Naive thymus-derived CD4-positive, alpha-beta T cell (primary cell): ENCODE measurements at regions of chr18 and their contacts with region 1.

Region 1: GRCh38 chr18:54224379-54225014 is at the start of gene MBD2:
- DNase-seq: peak; percentile 87 to 96 (median 90)
- ATAC-seq: peak; percentile 96
- H3K4me3 ChIP-seq: peak within 1 kb of the TSS; percentile 49
- H3K4me3 Mint-ChIP-seq: peak within 1 kb of the TSS; percentile 87 to 96 (median 92)
- H3K27ac ChIP-seq: peak within 1 kb of the TSS; percentile 72
- H3K27ac Mint-ChIP-seq: peak within 1 kb of the TSS; percentile 81 to 98 (median 92)
- H3K4me1 ChIP-seq: peaks cover 10 to 19% of the 10 kb centered on the region in 2 donors
- H3K4me1 Mint-ChIP-seq: peaks cover 14 to 43% (median 41%) of the 10 kb centered on the region in 7 donors
- H3K27me3 ChIP-seq: no peaks in the 10 kb centered on the region
- H3K27me3 Mint-ChIP-seq: no peaks in the 10 kb centered on the region
- total RNA-seq, gene MBD2: 69.7 to 118 (median 76.9) TPM

Region 2: DNA sequence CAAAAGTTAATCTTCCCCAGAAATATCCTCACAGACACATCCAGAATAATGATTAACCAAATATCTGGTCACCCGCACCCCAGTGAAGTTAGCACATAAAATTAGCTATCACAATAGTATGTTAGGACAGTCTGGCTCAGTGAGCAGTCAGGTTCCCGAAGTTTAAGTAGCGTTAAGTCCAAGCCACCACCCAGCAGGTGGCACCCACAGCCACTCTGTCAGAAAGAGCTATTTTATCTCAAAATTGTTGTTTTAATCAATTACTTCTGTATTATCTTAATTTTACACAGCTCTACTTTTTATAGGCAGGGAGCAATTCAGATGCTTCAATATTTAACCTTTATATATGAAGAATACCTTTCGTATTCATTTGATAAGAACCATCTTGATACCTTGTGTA is 537.5 kb before region 1 on chr18:
- CTCF ChIA-PET with region 1: no interaction called
- POLR2A ChIA-PET with region 1: no interaction called
- intact Hi-C with region 1: no loop called
- DNase-seq: no peak
- ATAC-seq: no peak
- H3K4me3 ChIP-seq: no peak overlapping the region
- H3K4me3 Mint-ChIP-seq: no peak overlapping the region
- H3K27ac ChIP-seq: no peak overlapping the region
- H3K27ac Mint-ChIP-seq: no peak overlapping the region
- H3K4me1 ChIP-seq: no peaks in the 10 kb centered on the region
- H3K4me1 Mint-ChIP-seq: no peaks in the 10 kb centered on the region
- H3K27me3 ChIP-seq: no peaks in the 10 kb centered on the region
- H3K27me3 Mint-ChIP-seq: no peaks in the 10 kb centered on the region

Region 3: DNA sequence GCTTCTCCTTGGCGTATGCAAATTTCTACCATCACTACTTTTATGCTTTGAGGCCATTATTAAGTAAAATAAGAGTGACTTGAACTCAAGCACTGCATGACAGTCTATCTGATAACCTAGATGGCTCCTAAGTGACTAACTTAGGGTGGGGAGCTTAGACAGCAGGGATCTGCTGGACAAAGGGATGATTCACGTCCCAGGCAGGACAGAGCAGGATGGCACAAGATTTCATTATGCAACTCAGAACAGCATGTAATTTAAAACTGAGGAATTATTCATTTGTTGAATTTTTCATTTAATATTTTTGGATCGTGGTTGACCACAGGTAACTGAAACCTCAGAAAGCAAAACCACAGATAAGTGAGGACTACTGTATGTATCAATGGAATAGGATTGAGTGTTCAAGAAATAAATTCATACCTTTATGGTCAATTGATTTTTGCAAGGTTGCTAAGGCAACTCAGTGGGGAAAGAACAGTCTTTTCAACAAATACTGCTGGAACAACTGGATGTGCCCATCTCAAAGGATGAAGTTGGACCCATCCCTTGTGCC is 115.3 kb before region 1 on chr18:
- CTCF ChIA-PET with region 1: no interaction called
- POLR2A ChIA-PET with region 1: no interaction called
- intact Hi-C with region 1: no loop called
- DNase-seq: no peak
- ATAC-seq: no peak
- H3K4me3 ChIP-seq: no peak overlapping the region
- H3K4me3 Mint-ChIP-seq: no peak overlapping the region
- H3K27ac ChIP-seq: no peak overlapping the region
- H3K27ac Mint-ChIP-seq: no peak overlapping the region
- H3K4me1 ChIP-seq: no peaks in the 10 kb centered on the region
- H3K4me1 Mint-ChIP-seq: no peaks in the 10 kb centered on the region
- H3K27me3 ChIP-seq: no peaks in the 10 kb centered on the region
- H3K27me3 Mint-ChIP-seq: peaks cover 5 to 46% (median 12%) of the 10 kb centered on the region in 5 donors

Region 4: GRCh38 chr18:54173980-54174630 is 50.4 kb before region 1 on chr18:
- CTCF ChIA-PET with region 1: no interaction called
- POLR2A ChIA-PET with region 1: interaction called, 8 read pairs
- intact Hi-C with region 1: loop called in 1 of 2 experiments (anchors 5 kb)
- DNase-seq: peak in 1 of 9 donors; percentile 0
- ATAC-seq: no peak
- H3K4me3 ChIP-seq: no peak overlapping the region
- H3K4me3 Mint-ChIP-seq: peak overlapping the region in 1 of 10 donors; percentile 39
- H3K27ac ChIP-seq: no peak overlapping the region
- H3K27ac Mint-ChIP-seq: peak overlapping the region; percentile 7 to 79 (median 44)
- H3K4me1 ChIP-seq: no peaks in the 10 kb centered on the region
- H3K4me1 Mint-ChIP-seq: peaks cover 11 to 48% (median 26%) of the 10 kb centered on the region in 7 donors
- H3K27me3 ChIP-seq: no peaks in the 10 kb centered on the region
- H3K27me3 Mint-ChIP-seq: no peaks in the 10 kb centered on the region

Region 5: GRCh38 chr18:54269893-54270844 is 45.7 kb after region 1 on chr18:
- CTCF ChIA-PET with region 1: interaction called, 40 read pairs
- POLR2A ChIA-PET with region 1: interaction called, 25 read pairs
- intact Hi-C with region 1: loop called (anchors 1 kb)
- DNase-seq: peak in 8 of 9 donors; percentile 2 to 60 (median 30)
- ATAC-seq: peak; percentile 26
- H3K4me3 ChIP-seq: peak overlapping the region; percentile 94
- H3K4me3 Mint-ChIP-seq: peak overlapping the region; percentile 82 to 97 (median 91)
- H3K27ac ChIP-seq: peak overlapping the region; percentile 85
- H3K27ac Mint-ChIP-seq: peak overlapping the region; percentile 71 to 96 (median 94)
- H3K4me1 ChIP-seq: peaks cover 16 to 17% of the 10 kb centered on the region in 2 donors
- H3K4me1 Mint-ChIP-seq: peaks cover 5 to 45% (median 22%) of the 10 kb centered on the region in 7 donors
- H3K27me3 ChIP-seq: no peaks in the 10 kb centered on the region
- H3K27me3 Mint-ChIP-seq: no peaks in the 10 kb centered on the region

Region 6: DNA sequence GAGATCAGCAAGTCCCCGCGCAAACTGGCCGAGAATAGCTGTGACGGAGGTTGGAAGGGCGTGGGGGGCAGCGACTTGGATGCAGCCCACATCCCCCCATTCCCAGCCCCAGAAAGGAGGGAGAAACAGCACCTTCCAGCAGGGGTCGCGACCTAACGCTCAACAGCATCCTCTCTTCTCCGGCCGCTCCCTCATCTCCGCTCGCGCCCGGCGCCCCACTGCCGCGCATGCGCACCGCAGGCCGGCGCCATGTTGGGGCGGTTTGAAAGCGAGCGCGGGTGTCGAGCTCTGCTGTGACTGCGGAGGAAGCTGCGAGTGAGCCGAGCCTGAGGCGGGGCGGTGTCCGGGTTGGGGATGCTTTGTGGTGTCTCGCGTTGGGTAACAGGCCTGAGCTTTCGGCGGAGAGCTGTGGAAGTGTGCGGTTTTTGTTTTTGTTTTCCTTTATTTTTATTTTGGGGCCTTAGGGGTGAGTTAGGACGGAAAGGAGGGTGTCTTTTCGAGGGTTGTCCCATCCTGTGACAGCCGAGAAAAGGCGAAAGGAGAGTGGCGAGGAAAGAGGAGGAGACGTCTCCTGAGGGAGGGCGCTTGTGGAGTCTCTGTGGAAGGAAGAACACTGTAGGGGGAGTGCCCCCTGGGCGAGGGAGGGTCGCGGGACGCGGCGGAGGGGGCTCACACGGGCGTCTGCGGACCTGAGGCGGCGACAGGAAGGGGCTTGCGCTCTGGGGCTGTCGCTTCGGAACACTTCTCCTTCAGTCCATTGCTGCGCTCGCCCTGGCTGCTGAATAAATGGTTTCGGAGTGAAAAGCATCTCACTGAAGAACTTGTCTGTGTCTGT is 133.4 kb after region 1 on chr18 and contains the starts of genes C18orf54 and STARD6:
- CTCF ChIA-PET with region 1: interaction called, 3 read pairs
- POLR2A ChIA-PET with region 1: interaction called, 7 read pairs
- intact Hi-C with region 1: loop called (anchors 1 kb)
- DNase-seq: peak; percentile 82 to 93 (median 91)
- ATAC-seq: peak; percentile 96
- H3K4me3 ChIP-seq: peak within 1 kb of the TSS; percentile 88
- H3K4me3 Mint-ChIP-seq: peak within 1 kb of the TSS; percentile 93 to 99 (median 97)
- H3K27ac ChIP-seq: peak within 1 kb of the TSS; percentile 60
- H3K27ac Mint-ChIP-seq: peak within 1 kb of the TSS; percentile 74 to 99 (median 91)
- H3K4me1 ChIP-seq: peaks cover 4 to 7% of the 10 kb centered on the region in 2 donors
- H3K4me1 Mint-ChIP-seq: peaks cover 6 to 32% (median 21%) of the 10 kb centered on the region in 7 donors
- H3K27me3 ChIP-seq: no peaks in the 10 kb centered on the region
- H3K27me3 Mint-ChIP-seq: peaks cover 0 to 12% (median 5%) of the 10 kb centered on the region in 5 donors
- total RNA-seq, gene C18orf54: 0.77 to 8.3 (median 3.6) TPM
- total RNA-seq, gene STARD6: not detected

Region 7: GRCh38 chr18:54671291-54671881 is 446.9 kb after region 1 on chr18:
- CTCF ChIA-PET with region 1: no interaction called
- POLR2A ChIA-PET with region 1: no interaction called
- intact Hi-C with region 1: loop called in 1 of 2 experiments (anchors 1 kb)
- DNase-seq: peak in 4 of 9 donors; percentile 16 to 30 (median 20)
- ATAC-seq: no peak
- H3K4me3 ChIP-seq: no peak overlapping the region
- H3K4me3 Mint-ChIP-seq: no peak overlapping the region
- H3K27ac ChIP-seq: no peak overlapping the region
- H3K27ac Mint-ChIP-seq: no peak overlapping the region
- H3K4me1 ChIP-seq: no peaks in the 10 kb centered on the region
- H3K4me1 Mint-ChIP-seq: no peaks in the 10 kb centered on the region
- H3K27me3 ChIP-seq: no peaks in the 10 kb centered on the region
- H3K27me3 Mint-ChIP-seq: peaks cover 0 to 10% (median 9%) of the 10 kb centered on the region in 5 donors